GM12878 (cell line): ENCODE measurements at regions of chr17 and their contacts with region 1.

Region 1: GRCh38 chr17:79045842-79046196 is 21.9 kb downstream of the C1QTNF1 start:
- DNase-seq: no peak
- ATAC-seq: peak; percentile 94
- H3K4me3 ChIP-seq: no peak overlapping the region
- H3K27ac ChIP-seq: no peak overlapping the region
- H3K4me1 ChIP-seq: no peaks in the 10 kb centered on the region
- H3K27me3 ChIP-seq: no peaks in the 10 kb centered on the region; a peak in 1 of 4 replicates
- CTCF ChIP-seq: peak; percentile 90 to 97 (median 92)
- EP300 ChIP-seq: no peak
- POLR2A ChIP-seq: no peak
- RAD21 ChIP-seq: peak; percentile 67

Region 2: DNA sequence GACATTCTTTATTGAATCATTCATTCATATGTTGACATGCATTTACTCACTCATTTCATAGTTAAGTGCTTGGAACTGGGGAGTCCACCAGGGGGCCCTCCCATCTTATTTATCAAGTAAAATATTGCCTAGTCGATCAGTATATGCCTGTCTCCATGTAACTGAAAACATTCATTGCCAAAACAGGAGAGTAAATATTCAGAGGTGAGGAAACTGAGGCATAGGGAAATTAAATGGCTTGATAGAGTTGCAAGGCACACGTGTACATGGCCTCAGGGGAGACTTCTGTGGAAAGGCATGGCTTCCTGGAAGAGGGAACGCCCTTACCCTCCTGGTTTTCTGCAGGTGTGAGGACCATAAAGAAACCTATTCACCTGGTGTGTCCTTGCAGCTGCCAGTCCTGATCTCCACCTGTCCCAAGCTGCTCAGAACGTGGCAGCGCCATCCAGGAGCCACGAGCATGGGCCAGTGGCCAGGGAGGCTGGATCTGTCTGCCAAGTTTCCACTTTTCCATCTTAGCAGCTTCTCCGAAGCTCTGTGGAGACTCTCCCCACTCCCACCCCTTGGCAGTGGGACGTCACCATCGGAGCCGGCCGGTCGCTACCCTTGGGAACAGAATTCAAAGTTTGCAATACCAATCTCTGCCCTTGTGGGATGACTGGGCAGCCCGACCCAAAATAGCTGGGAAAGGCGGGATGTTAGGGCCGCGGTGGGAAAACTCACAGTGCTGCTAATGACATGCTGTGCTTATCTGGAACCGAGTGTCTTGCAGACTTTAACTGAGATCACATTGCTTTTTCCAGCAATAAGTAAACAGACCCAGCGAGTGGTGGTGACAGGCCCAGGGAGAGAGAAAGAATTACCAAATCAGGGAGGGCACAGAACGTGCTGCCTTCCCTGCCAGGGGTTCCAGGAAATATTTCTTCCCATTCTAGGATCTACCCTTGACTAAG is 25.9 kb before region 1 on chr17:
- CTCF ChIA-PET with region 1: interaction called, 5 read pairs
- POLR2A ChIA-PET with region 1: interaction called, 4 read pairs
- RAD21 ChIA-PET with region 1: interaction called, 3 read pairs
- SMC1A ChIA-PET with region 1: interaction called, 10 read pairs
- in situ Hi-C with region 1: no loop called
- intact Hi-C with region 1: loop called (anchors 1 kb)
- DNase-seq: no peak
- ATAC-seq: peak; percentile 75
- H3K4me3 ChIP-seq: no peak overlapping the region
- H3K27ac ChIP-seq: no peak overlapping the region
- H3K4me1 ChIP-seq: no peaks in the 10 kb centered on the region
- H3K27me3 ChIP-seq: peaks cover 14 to 15% of the 10 kb centered on the region in 2 experiments
- CTCF ChIP-seq: peak; percentile 49 to 59 (median 53)
- EP300 ChIP-seq: no peak
- POLR2A ChIP-seq: no peak
- RAD21 ChIP-seq: peak; percentile 73

Region 3: GRCh38 chr17:79026345-79027273 is 19.2 kb before region 1 on chr17:
- CTCF ChIA-PET with region 1: interaction called, 5 read pairs
- POLR2A ChIA-PET with region 1: no interaction called
- RAD21 ChIA-PET with region 1: no interaction called
- SMC1A ChIA-PET with region 1: interaction called, 10 read pairs
- in situ Hi-C with region 1: no loop called
- intact Hi-C with region 1: no loop called
- DNase-seq: no peak
- ATAC-seq: no peak
- H3K4me3 ChIP-seq: no peak overlapping the region
- H3K27ac ChIP-seq: no peak overlapping the region
- H3K4me1 ChIP-seq: no peaks in the 10 kb centered on the region
- H3K27me3 ChIP-seq: peaks cover 19 to 24% of the 10 kb centered on the region in 2 experiments
- CTCF ChIP-seq: no peak
- EP300 ChIP-seq: no peak
- POLR2A ChIP-seq: no peak
- RAD21 ChIP-seq: no peak

Region 4: GRCh38 chr17:79065105-79065670 is 19.4 kb after region 1 on chr17:
- CTCF ChIA-PET with region 1: interaction called, 12 read pairs
- POLR2A ChIA-PET with region 1: no interaction called
- RAD21 ChIA-PET with region 1: no interaction called
- SMC1A ChIA-PET with region 1: interaction called, 3 read pairs
- in situ Hi-C with region 1: no loop called
- intact Hi-C with region 1: no loop called
- DNase-seq: no peak
- ATAC-seq: peak; percentile 51; the same call in 1 of the 3 replicates
- H3K4me3 ChIP-seq: no peak overlapping the region
- H3K27ac ChIP-seq: no peak overlapping the region
- H3K4me1 ChIP-seq: no peaks in the 10 kb centered on the region
- H3K27me3 ChIP-seq: no peaks in the 10 kb centered on the region
- CTCF ChIP-seq: peak; percentile 46 to 51 (median 47); a peak in 5 of 6 replicates
- EP300 ChIP-seq: no peak
- POLR2A ChIP-seq: no peak
- RAD21 ChIP-seq: peak; percentile 38; the same call in 1 of the 2 replicates

Region 5: GRCh38 chr17:79082311-79083190 is 36.7 kb after region 1 on chr17:
- CTCF ChIA-PET with region 1: interaction called, 14 read pairs
- POLR2A ChIA-PET with region 1: no interaction called
- RAD21 ChIA-PET with region 1: interaction called, 3 read pairs
- SMC1A ChIA-PET with region 1: interaction called, 4 read pairs
- in situ Hi-C with region 1: no loop called
- intact Hi-C with region 1: loop called (anchors 2 kb)
- DNase-seq: no peak
- ATAC-seq: peak; percentile 85
- H3K4me3 ChIP-seq: no peak overlapping the region
- H3K27ac ChIP-seq: no peak overlapping the region
- H3K4me1 ChIP-seq: no peaks in the 10 kb centered on the region
- H3K27me3 ChIP-seq: no peaks in the 10 kb centered on the region
- CTCF ChIP-seq: peak; percentile 68 to 89 (median 72)
- EP300 ChIP-seq: no peak
- POLR2A ChIP-seq: no peak
- RAD21 ChIP-seq: peak; percentile 57